AG04449 (cell line): ENCODE measurements at regions of chr9 and their contacts with region 1.

Region 1: GRCh38 chr9:69056191-69056815 is 20.8 kb downstream of the FXN start:
- DNase-seq: no peak
- H3K4me3 ChIP-seq: no peak overlapping the region
- CTCF ChIP-seq: no peak

Region 2: DNA sequence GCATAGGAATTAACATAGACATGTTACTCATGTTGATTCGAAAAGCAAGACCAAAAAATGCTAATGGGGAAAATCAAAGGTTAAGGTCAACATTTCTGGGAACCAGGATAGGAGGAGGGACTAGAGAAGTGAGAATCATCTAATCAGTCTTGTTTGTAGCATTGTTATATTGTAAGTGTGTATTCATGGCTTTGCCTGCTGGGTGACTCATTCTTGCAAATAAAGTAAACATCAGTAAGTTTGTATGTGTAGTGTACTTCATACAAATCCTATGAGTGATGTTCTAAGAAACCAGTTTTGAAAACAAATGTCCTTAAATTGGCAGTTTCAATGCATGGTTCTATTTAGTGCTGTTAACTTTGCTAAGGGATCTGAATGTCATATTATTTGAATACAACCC is 436.7 kb before region 1 on chr9:
- CTCF ChIA-PET with region 1: no interaction called
- POLR2A ChIA-PET with region 1: no interaction called
- DNase-seq: no peak
- H3K4me3 ChIP-seq: no peak overlapping the region
- CTCF ChIP-seq: no peak

Region 3: GRCh38 chr9:69035438-69036308 is 20.6 kb before region 1 on chr9 and contains the start of gene FXN:
- CTCF ChIA-PET with region 1: interaction called, 21 read pairs
- POLR2A ChIA-PET with region 1: interaction called, 3 read pairs
- DNase-seq: no peak
- H3K4me3 ChIP-seq: peak within 1 kb of the TSS; percentile 89
- CTCF ChIP-seq: peak; percentile 99

Region 4: GRCh38 chr9:69066955-69067354 is 10.7 kb after region 1 on chr9:
- CTCF ChIA-PET with region 1: interaction called, 36 read pairs
- POLR2A ChIA-PET with region 1: no interaction called
- DNase-seq: no peak
- H3K4me3 ChIP-seq: no peak overlapping the region
- CTCF ChIP-seq: no peak

Region 5: DNA sequence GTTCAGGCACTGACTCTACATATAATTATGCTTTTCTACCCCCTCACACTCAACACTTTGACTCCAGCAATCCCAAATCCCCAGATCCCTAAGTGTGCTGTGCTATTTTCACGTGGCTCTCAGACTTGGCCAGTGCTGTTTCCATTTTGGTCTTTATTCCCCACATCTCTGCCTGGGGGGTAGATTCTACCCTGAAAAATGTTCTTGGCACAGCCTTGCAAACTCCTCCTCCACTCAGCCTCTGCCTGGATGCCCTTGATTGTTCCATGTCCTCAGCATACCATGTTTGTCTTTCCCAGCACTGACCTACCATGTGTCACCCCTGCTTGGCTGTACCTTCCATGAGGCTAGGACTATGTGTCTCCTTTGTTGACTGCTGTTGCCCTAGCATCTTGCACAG is 22.3 kb after region 1 on chr9:
- CTCF ChIA-PET with region 1: interaction called, 23 read pairs
- POLR2A ChIA-PET with region 1: no interaction called
- DNase-seq: no peak
- H3K4me3 ChIP-seq: no peak overlapping the region
- CTCF ChIP-seq: no peak

Region 6: DNA sequence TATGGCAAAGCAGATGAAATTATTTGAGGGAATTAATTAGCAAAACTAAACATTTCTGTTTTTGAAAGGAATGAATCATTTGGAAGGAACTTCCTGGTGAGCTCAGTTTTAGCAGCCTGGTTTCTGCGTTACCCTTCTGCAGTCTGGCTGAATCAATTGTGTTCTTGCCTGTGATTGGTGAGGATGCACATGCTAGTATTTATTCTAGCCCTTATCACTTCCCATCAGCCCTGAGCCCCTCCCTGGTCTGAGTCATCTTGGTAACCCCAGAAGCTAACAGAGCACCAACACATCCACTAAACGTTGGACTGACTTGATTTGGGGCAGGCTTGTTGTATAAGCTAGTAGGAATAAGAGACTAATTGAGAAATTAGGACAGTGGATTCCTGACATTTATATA is 124.4 kb after region 1 on chr9:
- CTCF ChIA-PET with region 1: interaction called, 58 read pairs
- POLR2A ChIA-PET with region 1: no interaction called
- DNase-seq: peak; percentile 93
- H3K4me3 ChIP-seq: no peak overlapping the region
- CTCF ChIP-seq: no peak

Region 7: GRCh38 chr9:69199769-69200470 is 143.6 kb after region 1 on chr9:
- CTCF ChIA-PET with region 1: interaction called, 511 read pairs
- POLR2A ChIA-PET with region 1: no interaction called
- DNase-seq: no peak
- H3K4me3 ChIP-seq: no peak overlapping the region
- CTCF ChIP-seq: no peak